ENCODE measurements at regions of chr2 and their contacts with region 1.

Region 1: GRCh38 chr2:232887171-232887850 is 17.2 kb downstream of the SNORC start:
- DNase-seq: peak in 1 of 4 donors; percentile 4
- ATAC-seq: no peak
- H3K4me3 ChIP-seq: no peak overlapping the region
- H3K27ac ChIP-seq: no peak overlapping the region
- H3K4me1 ChIP-seq: peaks cover 18% of the 10 kb centered on the region
- H3K27me3 ChIP-seq: no peaks in the 10 kb centered on the region
- CTCF ChIP-seq: no peak
- POLR2A ChIP-seq: no peak

Region 2: GRCh38 chr2:232957657-232958090 is 70.4 kb after region 1 on chr2:
- intact Hi-C with region 1: no loop called
- DNase-seq: no peak
- ATAC-seq: no peak
- H3K4me3 ChIP-seq: no peak overlapping the region
- H3K27ac ChIP-seq: no peak overlapping the region
- H3K4me1 ChIP-seq: no peaks in the 10 kb centered on the region
- H3K27me3 ChIP-seq: no peaks in the 10 kb centered on the region
- CTCF ChIP-seq: no peak
- POLR2A ChIP-seq: no peak

Region 3: DNA sequence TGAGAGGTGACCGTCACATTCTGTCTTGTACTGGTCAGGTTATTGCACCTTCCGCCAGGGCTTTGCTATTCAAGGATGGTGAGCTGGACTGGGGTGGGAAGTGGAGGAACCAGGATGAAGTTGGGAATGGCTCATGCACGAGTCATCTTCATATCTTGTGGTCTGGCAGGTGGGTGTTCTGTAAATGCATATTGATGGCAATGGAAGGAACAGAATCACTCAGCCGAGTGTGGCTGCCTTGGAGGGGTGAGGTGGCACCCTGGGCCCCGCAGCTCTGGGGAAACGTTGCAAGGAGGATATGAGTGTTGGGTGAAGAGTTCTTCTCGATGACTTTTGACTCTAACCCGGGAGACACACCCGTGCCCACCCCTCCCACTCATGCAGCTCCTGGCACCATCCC is 146.4 kb after region 1 on chr2:
- intact Hi-C with region 1: loop called (anchors 10 kb)
- DNase-seq: no peak
- ATAC-seq: no peak
- H3K4me3 ChIP-seq: no peak overlapping the region
- H3K27ac ChIP-seq: no peak overlapping the region
- H3K4me1 ChIP-seq: no peaks in the 10 kb centered on the region
- H3K27me3 ChIP-seq: no peaks in the 10 kb centered on the region
- CTCF ChIP-seq: no peak
- POLR2A ChIP-seq: no peak

Region 4: DNA sequence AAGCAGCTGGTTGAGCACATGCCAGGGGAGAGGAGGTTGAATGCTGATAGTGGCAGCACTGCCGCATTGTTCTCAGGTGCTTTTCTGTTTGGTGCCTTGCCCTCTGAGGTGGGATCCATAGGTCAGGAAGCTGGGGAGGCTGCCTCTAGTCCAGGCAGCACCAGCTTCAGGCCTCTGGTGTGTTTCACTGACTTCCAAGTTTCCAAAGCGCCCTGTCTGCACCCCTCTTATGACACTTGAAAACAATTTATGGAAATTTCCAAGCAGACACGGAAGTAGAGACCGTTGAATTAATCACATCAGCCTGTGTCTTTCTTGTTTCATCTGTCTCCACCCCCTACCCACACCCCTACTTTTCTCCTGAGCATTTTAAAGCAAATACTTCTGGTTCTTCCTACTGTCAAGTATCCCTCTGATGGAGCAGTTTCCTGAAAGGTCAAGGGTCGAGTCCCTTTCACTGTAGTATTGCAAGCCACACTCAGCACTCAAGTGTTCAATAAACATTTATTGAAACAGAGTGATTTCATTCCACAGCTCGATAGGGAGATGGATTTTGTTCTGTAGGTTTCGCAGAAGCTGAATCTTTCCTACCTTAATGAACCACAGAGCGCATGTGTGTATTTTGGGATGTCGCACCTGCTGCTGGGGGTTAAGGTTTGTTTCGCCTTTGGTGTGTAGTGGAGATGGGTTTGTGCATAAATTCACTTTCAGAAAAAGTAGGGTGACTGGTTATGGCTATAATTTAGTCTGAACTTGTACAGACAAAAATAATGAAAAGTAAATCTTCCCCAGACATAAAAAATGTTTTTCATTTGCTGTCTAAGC is 488.4 kb after region 1 on chr2:
- intact Hi-C with region 1: no loop called
- DNase-seq: no peak
- ATAC-seq: no peak
- H3K4me3 ChIP-seq: no peak overlapping the region
- H3K27ac ChIP-seq: no peak overlapping the region
- H3K4me1 ChIP-seq: no peaks in the 10 kb centered on the region
- H3K27me3 ChIP-seq: no peaks in the 10 kb centered on the region
- CTCF ChIP-seq: no peak
- POLR2A ChIP-seq: no peak

Measured in body of pancreas (tissue), 4 donors.